MCF 10A (cell line): ENCODE measurements at regions of chrX and their contacts with region 1.

Region 1: GRCh38 chrX:47200385-47201150 is 6.9 kb downstream of the UBA1 start:
- DNase-seq: peak; percentile 51
- H3K4me3 Mint-ChIP-seq: no peak overlapping the region
- H3K27ac Mint-ChIP-seq: peak overlapping the region; percentile 73
- H3K4me1 Mint-ChIP-seq: peaks cover 18% of the 10 kb centered on the region
- H3K27me3 Mint-ChIP-seq: no peaks in the 10 kb centered on the region
- CTCF ChIP-seq: peak; percentile 28

Region 2: GRCh38 chrX:46941341-46941740 is 259.2 kb before region 1 on chrX:
- CTCF ChIA-PET with region 1: no interaction called
- POLR2A ChIA-PET with region 1: no interaction called
- intact Hi-C with region 1: no loop called
- DNase-seq: no peak
- H3K4me3 Mint-ChIP-seq: no peak overlapping the region
- H3K27ac Mint-ChIP-seq: no peak overlapping the region
- H3K4me1 Mint-ChIP-seq: no peaks in the 10 kb centered on the region
- H3K27me3 Mint-ChIP-seq: peaks cover 77% of the 10 kb centered on the region
- CTCF ChIP-seq: no peak

Region 3: GRCh38 chrX:47217642-47218279 is 17.2 kb after region 1 on chrX:
- CTCF ChIA-PET with region 1: no interaction called
- POLR2A ChIA-PET with region 1: interaction called, 17 read pairs
- intact Hi-C with region 1: no loop called
- DNase-seq: peak; percentile 100
- H3K4me3 Mint-ChIP-seq: peak overlapping the region; percentile 82
- H3K27ac Mint-ChIP-seq: peak overlapping the region; percentile 99
- H3K4me1 Mint-ChIP-seq: peaks cover 41% of the 10 kb centered on the region
- H3K27me3 Mint-ChIP-seq: no peaks in the 10 kb centered on the region
- CTCF ChIP-seq: no peak

Region 4: DNA sequence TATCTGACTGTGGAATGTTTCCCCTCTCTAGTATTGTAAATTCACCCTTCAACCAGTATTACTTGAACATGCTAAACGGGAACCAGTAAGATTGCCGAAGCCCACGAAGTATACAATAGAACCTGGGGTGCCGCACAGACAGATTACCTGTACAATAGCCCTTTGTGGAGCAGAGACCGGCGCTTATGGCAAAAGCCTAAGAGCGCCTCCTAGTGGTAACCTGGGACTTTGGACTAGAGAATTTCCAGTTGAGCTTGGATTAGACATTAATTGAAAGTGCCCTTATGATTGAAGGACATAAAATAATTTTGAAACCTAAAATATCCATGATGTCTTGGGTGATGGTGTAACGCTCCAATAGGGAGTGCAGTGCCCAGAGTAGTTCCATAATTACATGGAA is 183.9 kb after region 1 on chrX:
- CTCF ChIA-PET with region 1: interaction called, 9 read pairs
- POLR2A ChIA-PET with region 1: interaction called, 4 read pairs
- intact Hi-C with region 1: loop called (anchors 1 kb)
- DNase-seq: peak; percentile 75
- H3K4me3 Mint-ChIP-seq: no peak overlapping the region
- H3K27ac Mint-ChIP-seq: no peak overlapping the region
- H3K4me1 Mint-ChIP-seq: peaks cover 5% of the 10 kb centered on the region
- H3K27me3 Mint-ChIP-seq: peaks cover 25% of the 10 kb centered on the region
- CTCF ChIP-seq: peak; percentile 60